ENCODE measurements at regions of chr21 and their contacts with region 1.

Region 1: DNA sequence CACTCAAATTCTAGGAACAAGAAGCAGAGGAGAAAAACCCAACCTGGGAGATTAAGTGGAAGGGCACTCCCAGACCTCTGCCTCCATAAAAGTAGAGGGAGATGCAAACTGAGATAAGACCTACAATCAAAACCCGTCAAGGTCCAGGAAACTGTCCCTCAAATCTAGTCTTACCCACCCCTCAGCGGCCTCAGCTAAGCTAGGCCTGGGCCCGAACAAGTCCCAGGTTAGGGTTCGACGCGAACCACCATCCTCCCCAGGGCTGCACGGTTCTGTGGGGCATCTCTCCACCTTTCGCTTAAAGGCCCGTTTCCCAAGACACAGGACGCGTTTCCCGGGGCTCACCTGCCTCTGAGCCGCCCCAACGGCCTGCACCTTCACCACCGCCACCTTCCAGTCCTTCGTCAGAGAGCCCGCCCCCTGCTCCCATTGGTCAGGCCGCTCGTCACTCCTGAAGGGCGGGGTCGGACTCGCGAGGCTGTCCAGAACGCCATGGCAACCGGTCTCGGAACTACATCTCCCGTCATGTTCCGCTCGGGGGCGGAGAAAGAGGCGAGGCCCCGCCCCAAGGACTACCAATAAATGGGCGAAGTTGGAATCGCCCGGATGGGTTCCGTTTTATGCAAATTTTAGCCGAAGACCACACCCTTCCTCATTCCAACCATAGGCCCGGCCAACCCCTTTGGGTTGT is at the start of gene CRYZL1:
- DNase-seq: peak; percentile 100
- total RNA-seq, gene CRYZL1: 23.0 TPM

Region 2: DNA sequence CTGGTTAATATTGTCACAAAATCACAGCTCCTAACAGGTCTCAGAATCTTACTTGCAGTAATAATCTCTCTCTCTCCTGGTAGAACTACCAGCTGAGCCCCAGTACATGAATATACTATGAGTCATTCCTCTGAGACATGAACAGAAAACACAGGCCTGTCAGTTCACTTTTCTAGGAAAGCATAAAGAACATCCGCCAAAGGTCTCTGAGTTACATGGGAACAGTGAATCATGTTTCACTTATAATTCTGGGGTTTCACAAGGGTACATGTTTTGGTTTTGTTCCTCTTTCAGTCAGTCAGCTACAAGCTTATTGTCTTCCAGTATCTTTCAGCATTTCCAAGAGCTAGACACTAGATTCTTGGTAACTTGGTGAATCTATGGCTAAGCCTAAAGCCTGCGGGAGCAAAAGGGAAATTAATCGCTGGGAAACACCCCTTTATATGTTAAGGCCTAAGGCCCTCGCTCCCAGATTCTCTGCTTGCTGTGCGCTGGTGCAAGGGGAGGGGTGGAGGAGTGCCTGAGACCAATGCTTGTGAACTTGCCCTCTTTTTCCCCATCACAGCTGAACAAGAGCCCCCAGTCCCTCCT is 206.6 kb before region 1 on chr21:
- intact Hi-C with region 1: no loop called
- DNase-seq: no peak

Region 3: GRCh38 chr21:33761441-33762036 is 120.1 kb after region 1 on chr21:
- intact Hi-C with region 1: loop called (anchors 5 kb)
- DNase-seq: no peak

Region 4: GRCh38 chr21:33894736-33895288 is 253.3 kb after region 1 on chr21:
- intact Hi-C with region 1: loop called (anchors 10 kb)
- DNase-seq: peak; percentile 86